Heart left ventricle (tissue), 16 donors: ENCODE measurements at regions of chr22 and their contacts with region 1.

Region 1: DNA sequence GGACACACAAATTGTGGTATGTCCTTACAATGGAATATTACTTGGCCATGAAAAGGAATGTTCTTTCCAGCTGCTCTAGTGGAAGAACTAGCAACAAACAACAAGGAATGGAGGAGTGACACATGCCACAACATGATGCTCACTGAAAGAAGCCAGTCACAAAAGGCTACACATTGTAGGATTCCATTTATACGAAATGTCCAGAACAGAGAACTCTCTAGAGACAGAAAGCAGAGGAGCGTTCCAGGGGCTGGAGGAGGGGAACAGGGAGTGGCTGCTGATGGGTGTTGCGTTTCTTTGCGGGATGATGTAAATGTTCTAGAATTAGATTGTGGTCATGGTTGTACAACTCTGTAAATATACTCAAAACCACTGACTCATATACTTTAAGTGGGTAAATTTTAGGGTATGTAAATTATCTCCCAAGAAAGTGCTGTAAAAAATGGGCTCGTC is 32.4 kb upstream of the PDGFB start:
- DNase-seq: no peak
- ATAC-seq: no peak
- H3K4me3 ChIP-seq: no peak overlapping the region
- H3K27ac ChIP-seq: peak overlapping the region; percentile 17 to 83 (median 58)
- H3K4me1 ChIP-seq: peaks cover 0 to 61% (median 18%) of the 10 kb centered on the region in 12 donors
- H3K27me3 ChIP-seq: no peaks in the 10 kb centered on the region
- CTCF ChIP-seq: no peak
- POLR2A ChIP-seq: no peak

Region 2: DNA sequence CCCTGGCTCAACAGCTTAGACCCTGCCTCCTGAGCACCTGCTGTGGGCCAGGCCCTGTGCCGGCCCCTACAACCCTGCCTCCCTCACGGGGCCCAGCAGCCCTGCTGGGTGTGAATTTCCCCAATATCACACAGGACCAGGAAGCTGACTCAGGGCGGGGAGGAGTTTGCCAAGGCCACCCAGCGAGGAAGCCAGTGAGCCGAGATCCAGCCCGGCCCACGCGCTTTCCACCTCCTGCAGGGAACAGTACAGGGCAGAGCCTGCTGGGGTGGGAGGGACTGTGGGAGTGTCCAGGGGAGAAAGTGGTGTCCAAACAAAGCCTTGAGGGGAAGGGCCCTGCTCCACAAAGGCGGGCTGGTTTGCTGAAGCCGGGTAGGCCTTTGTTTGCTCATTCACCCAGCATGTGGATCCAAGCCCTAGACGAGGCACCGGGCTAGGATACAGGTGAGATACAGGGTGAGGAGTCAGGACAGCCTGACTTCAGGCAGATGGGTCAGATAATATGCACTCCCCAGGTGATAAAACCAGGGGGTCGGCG is 15.4 kb after region 1 on chr22:
- intact Hi-C with region 1: loop called in 1 of 10 experiments (anchors 2 kb)
- DNase-seq: peak; percentile 94 to 96 (median 95)
- ATAC-seq: peak; percentile 84 to 92 (median 90)
- H3K4me3 ChIP-seq: no peak overlapping the region
- H3K27ac ChIP-seq: peak overlapping the region; percentile 47 to 94 (median 84)
- H3K4me1 ChIP-seq: peaks cover 20 to 53% (median 40%) of the 10 kb centered on the region in 12 donors
- H3K27me3 ChIP-seq: no peaks in the 10 kb centered on the region
- CTCF ChIP-seq: no peak
- POLR2A ChIP-seq: peak in 1 of 2 donors; percentile 51